PC-3 (cell line): ENCODE measurements at regions of chr1 and their contacts with region 1.

Region 1: DNA sequence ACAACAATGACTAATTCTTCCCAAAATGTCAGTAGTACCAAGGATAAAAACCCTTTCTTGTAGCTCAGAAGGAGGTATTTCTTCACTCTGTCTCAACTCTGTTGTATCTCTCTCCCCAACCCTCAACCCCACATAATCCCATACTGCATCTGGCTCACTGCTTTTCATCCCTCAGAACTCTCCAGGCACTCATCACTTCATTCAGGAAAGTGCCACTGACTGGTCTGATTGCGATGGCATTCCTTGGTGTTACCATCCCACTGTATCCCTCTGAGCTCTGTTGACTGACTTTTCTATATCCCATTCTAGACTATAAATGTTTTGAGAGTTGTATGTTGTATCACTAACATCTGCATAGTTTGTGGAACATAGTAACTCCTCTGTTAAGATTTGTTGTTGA is 483.5 kb upstream of the ADGRL2 start:
- DNase-seq: no peak
- ATAC-seq: no peak
- H3K4me3 ChIP-seq: no peak overlapping the region
- H3K27ac ChIP-seq: no peak overlapping the region
- H3K4me1 ChIP-seq: no peaks in the 10 kb centered on the region
- H3K27me3 ChIP-seq: peaks cover 14% of the 10 kb centered on the region
- CTCF ChIP-seq: no peak

Region 2: DNA sequence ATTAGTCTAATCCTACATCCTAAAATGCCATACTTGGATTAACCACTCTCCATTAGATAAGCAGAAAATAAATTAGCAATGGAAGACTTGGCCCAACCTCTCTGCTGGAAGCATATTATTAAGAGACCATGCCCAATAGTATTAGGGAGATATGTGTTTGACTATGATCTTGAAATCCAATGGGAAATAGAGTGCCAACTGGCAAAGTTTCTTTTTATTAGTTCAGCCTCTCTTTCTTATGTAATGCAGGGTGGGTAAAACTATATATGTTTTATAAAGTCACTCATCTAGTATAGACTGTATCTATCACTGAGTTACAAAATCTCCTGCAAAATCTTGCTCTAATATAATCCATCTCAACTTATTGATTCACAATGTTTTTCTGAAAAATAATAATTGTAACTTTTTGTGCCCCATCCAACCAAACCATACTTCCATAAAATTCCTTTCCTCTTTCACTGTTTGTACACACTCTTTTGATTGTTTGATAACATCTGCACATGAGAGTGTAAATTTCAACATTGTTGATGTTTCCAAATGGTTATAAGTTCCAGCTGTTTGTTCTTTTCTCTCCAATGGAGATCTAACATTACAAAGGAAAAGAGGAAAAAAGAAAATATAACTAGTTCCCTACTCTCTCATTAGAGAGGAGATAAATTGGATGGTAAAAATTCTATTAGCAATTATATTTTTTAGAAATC is 75.5 kb after region 1 on chr1:
- CTCF ChIA-PET with region 1: no interaction called
- POLR2A ChIA-PET with region 1: interaction called, 12 read pairs
- intact Hi-C with region 1: no loop called
- DNase-seq: no peak
- ATAC-seq: no peak
- H3K4me3 ChIP-seq: no peak overlapping the region
- H3K27ac ChIP-seq: no peak overlapping the region
- H3K4me1 ChIP-seq: no peaks in the 10 kb centered on the region
- H3K27me3 ChIP-seq: peaks cover 2% of the 10 kb centered on the region; the same call in 1 of the 2 replicates
- CTCF ChIP-seq: no peak

Region 3: GRCh38 chr1:81559662-81560350 is 242.6 kb after region 1 on chr1:
- CTCF ChIA-PET with region 1: no interaction called
- POLR2A ChIA-PET with region 1: no interaction called
- intact Hi-C with region 1: no loop called
- DNase-seq: peak; percentile 49
- ATAC-seq: peak; percentile 55
- H3K4me3 ChIP-seq: no peak overlapping the region
- H3K27ac ChIP-seq: no peak overlapping the region
- H3K4me1 ChIP-seq: peaks cover 7% of the 10 kb centered on the region; the same call in 1 of the 2 replicates
- H3K27me3 ChIP-seq: no peaks in the 10 kb centered on the region
- CTCF ChIP-seq: peak; percentile 43